Thyroid gland (tissue), 4 donors: ENCODE measurements at regions of chr11 and their contacts with region 1.

Region 1: DNA sequence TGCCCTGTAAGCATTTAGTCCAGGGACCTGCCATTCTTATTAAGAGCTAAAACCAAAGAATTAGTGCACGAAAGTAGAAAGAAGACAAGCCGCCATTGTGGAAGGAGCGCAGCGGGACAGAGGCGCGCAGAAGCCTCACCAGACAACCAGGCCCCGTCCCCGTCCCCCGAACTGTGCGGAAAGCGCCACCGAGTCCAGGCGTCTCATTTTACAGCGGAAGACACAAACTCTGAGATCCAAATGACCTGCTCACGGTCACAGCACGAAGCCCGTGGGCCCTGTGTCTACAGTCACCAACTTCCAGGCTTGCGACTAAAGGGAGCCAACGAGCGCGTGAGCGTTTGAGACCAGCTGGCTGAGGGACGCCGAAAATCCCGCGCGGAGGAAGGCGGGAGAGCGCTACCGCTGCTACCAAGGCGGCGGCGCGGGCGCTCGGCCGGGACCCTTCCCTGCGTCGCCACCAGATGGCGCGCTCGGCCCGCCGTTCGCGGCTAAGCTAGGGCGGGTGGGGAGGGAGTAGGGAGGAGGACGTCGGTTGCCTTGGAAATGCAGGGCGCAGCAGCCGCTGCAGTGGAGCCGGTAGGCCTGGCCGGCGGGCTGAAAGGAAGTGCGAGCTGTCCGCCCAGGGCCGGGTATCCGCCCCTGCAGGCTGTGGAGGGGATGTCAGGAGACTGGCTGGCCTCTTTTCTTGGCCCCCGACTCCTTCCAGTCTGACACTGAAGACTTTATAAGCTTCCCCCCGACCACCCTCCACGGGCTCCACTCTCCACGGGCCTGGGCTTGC is 434 bp upstream of the CCDC83 start:
- DNase-seq: peak; percentile 88 to 89
- H3K4me3 ChIP-seq: peak overlapping the region in 2 of 3 donors; percentile 45 to 51
- H3K27ac ChIP-seq: peak overlapping the region; percentile 58 to 83 (median 78)
- H3K4me1 ChIP-seq: peaks cover 0 to 4% of the 10 kb centered on the region in 2 donors
- H3K27me3 ChIP-seq: no peaks in the 10 kb centered on the region
- CTCF ChIP-seq: peak; percentile 56 to 99 (median 90)
- POLR2A ChIP-seq: peak in 1 of 2 donors; percentile 22

Region 2: GRCh38 chr11:86218125-86219084 is 363.7 kb after region 1 on chr11:
- intact Hi-C with region 1: loop called (anchors 10 kb)
- DNase-seq: peak; percentile 57 to 72
- H3K4me3 ChIP-seq: no peak overlapping the region
- H3K27ac ChIP-seq: no peak overlapping the region
- H3K4me1 ChIP-seq: no peaks in the 10 kb centered on the region
- H3K27me3 ChIP-seq: no peaks in the 10 kb centered on the region
- CTCF ChIP-seq: peak; percentile 65 to 91 (median 82)
- POLR2A ChIP-seq: no peak